HepG2 (cell line): ENCODE measurements at regions of chr17 and their contacts with region 1.

Region 1: DNA sequence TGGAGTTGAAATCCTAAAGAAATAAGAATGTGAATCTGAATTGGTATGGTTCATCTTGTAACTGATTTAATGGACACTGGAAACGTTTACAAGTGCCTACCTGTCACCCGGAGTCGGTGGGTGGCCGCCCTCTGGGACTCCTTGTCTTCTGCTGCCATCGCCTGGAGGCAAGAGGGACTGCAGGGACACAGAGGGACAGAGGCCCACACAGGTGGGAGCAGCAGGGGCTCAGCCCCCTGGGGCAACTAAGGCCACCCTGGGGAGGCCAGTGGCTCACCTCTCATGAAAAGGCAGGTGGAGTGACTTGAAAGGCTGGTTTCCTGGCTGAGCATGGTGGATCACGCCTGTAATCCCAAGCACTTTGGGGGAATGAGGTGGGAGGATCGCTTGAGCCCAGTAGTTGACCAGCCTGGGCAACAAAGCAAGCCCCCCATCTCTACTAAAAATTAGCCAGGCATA is 23.2 kb downstream of the TMEM92 start:
- DNase-seq: peak; percentile 75
- ATAC-seq: peak; percentile 98
- H3K4me3 ChIP-seq: no peak overlapping the region
- H3K27ac ChIP-seq: no peak overlapping the region
- H3K4me1 ChIP-seq: no peaks in the 10 kb centered on the region
- H3K27me3 ChIP-seq: peaks cover 2 to 4% of the 10 kb centered on the region in 2 experiments; a peak in 2 of 5 replicates
- CTCF ChIP-seq: peak; percentile 98
- EP300 ChIP-seq: no peak
- POLR2A ChIP-seq: no peak
- RAD21 ChIP-seq: peak; percentile 98

Region 2: DNA sequence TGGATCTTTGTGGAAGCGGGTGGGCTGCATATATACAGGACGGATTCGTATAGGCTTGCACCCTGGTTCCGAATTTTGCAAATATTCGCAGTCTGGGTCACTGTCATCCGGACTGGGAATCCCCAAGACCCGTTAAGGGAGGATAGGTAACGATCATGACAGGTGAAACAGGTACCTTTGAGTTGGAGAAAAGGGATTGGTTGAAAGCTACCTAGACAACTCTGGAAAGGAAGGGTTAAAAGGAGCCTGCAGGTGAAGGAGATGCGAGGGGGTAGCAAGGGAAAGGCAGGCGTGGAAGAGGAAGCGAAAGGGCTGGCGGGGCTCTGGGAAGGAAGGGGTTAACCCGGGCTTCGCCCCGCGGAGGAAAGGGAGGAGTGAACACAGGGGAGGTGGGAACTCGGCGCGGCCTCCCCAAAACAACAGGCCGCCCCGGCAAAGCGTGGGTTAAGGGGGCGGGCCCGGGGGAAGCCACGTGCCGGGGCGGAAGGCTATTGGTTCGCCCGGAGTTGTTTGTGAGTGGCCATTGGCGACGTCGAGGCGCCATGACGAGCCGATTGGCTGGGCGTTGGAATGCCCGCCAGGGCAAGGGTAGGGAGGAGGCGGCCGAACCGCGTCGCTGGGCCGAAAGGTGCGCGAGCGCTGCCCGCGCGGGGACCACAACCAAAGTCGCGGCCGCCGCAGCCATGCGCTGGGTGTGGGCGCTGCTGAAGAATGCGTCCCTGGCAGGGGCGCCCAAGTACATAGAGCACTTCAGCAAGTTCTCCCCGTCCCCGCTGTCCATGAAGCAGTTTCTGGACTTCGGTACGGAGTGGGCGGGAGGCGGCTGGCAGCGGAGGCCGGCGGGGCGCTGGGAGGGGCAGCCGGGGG is 202.4 kb before region 1 on chr17 and contains the start of gene PDK2:
- CTCF ChIA-PET with region 1: interaction called, 15 read pairs
- POLR2A ChIA-PET with region 1: no interaction called
- in situ Hi-C with region 1: no loop called
- intact Hi-C with region 1: loop called (anchors 1 kb)
- DNase-seq: peak; percentile 95
- ATAC-seq: peak; percentile 96
- H3K4me3 ChIP-seq: peak within 1 kb of the TSS; percentile 84 to 88 (median 87)
- H3K27ac ChIP-seq: peak within 1 kb of the TSS; percentile 67
- H3K4me1 ChIP-seq: peaks cover 21% of the 10 kb centered on the region
- H3K27me3 ChIP-seq: peaks cover 3 to 20% of the 10 kb centered on the region in 2 experiments; a peak in 4 of 5 replicates
- CTCF ChIP-seq: no peak
- EP300 ChIP-seq: no peak; a peak in 1 of 4 replicates
- POLR2A ChIP-seq: peak; percentile 58 to 65
- RAD21 ChIP-seq: no peak; the same call in 1 of the 2 replicates
- total RNA-seq, gene PDK2: 18.5 and 19.2 TPM in 2 replicates

Region 3: GRCh38 chr17:50169121-50169764 is 128.2 kb before region 1 on chr17:
- CTCF ChIA-PET with region 1: interaction called, 18 read pairs
- POLR2A ChIA-PET with region 1: no interaction called
- in situ Hi-C with region 1: no loop called
- intact Hi-C with region 1: no loop called
- DNase-seq: peak; percentile 69
- ATAC-seq: peak; percentile 58
- H3K4me3 ChIP-seq: no peak overlapping the region
- H3K27ac ChIP-seq: no peak overlapping the region
- H3K4me1 ChIP-seq: peaks cover 33% of the 10 kb centered on the region
- H3K27me3 ChIP-seq: peaks cover 10 to 46% of the 10 kb centered on the region in 2 experiments; a peak in 3 of 5 replicates
- CTCF ChIP-seq: peak; percentile 92
- EP300 ChIP-seq: no peak
- POLR2A ChIP-seq: no peak
- RAD21 ChIP-seq: peak; percentile 92

Region 4: GRCh38 chr17:50200457-50201275 is 96.8 kb before region 1 on chr17:
- CTCF ChIA-PET with region 1: interaction called, 223 read pairs
- POLR2A ChIA-PET with region 1: no interaction called
- in situ Hi-C with region 1: no loop called
- intact Hi-C with region 1: loop called (anchors 1 kb)
- DNase-seq: peak; percentile 71
- ATAC-seq: peak; percentile 84
- H3K4me3 ChIP-seq: peak overlapping the region; percentile 26 to 73 (median 36); a peak in 5 of 6 replicates
- H3K27ac ChIP-seq: no peak overlapping the region
- H3K4me1 ChIP-seq: 0 out of 2 replicates have a peak, but pooled peaks cover 9% of the 10 kb centered on the region
- H3K27me3 ChIP-seq: peaks cover 10 to 72% of the 10 kb centered on the region in 2 experiments
- CTCF ChIP-seq: peak; percentile 95
- EP300 ChIP-seq: no peak
- POLR2A ChIP-seq: no peak
- RAD21 ChIP-seq: peak; percentile 100

Region 5: GRCh38 chr17:50258647-50259476 is 38.6 kb before region 1 on chr17:
- CTCF ChIA-PET with region 1: no interaction called
- POLR2A ChIA-PET with region 1: no interaction called
- in situ Hi-C with region 1: no loop called
- intact Hi-C with region 1: no loop called
- DNase-seq: no peak
- ATAC-seq: no peak
- H3K4me3 ChIP-seq: no peak overlapping the region
- H3K27ac ChIP-seq: no peak overlapping the region
- H3K4me1 ChIP-seq: no peaks in the 10 kb centered on the region
- H3K27me3 ChIP-seq: peaks cover 23 to 82% of the 10 kb centered on the region in 2 experiments
- CTCF ChIP-seq: no peak
- EP300 ChIP-seq: no peak
- POLR2A ChIP-seq: no peak
- RAD21 ChIP-seq: no peak

Region 6: GRCh38 chr17:50269477-50270434 is 27.7 kb before region 1 on chr17:
- CTCF ChIA-PET with region 1: interaction called, 17 read pairs
- POLR2A ChIA-PET with region 1: no interaction called
- in situ Hi-C with region 1: no loop called
- intact Hi-C with region 1: no loop called
- DNase-seq: peak; percentile 61
- ATAC-seq: peak; percentile 77
- H3K4me3 ChIP-seq: no peak overlapping the region
- H3K27ac ChIP-seq: no peak overlapping the region
- H3K4me1 ChIP-seq: peaks cover 31% of the 10 kb centered on the region
- H3K27me3 ChIP-seq: peaks cover 10 to 73% of the 10 kb centered on the region in 2 experiments; a peak in 4 of 5 replicates
- CTCF ChIP-seq: peak; percentile 76
- EP300 ChIP-seq: no peak
- POLR2A ChIP-seq: no peak
- RAD21 ChIP-seq: peak; percentile 77

Region 7: DNA sequence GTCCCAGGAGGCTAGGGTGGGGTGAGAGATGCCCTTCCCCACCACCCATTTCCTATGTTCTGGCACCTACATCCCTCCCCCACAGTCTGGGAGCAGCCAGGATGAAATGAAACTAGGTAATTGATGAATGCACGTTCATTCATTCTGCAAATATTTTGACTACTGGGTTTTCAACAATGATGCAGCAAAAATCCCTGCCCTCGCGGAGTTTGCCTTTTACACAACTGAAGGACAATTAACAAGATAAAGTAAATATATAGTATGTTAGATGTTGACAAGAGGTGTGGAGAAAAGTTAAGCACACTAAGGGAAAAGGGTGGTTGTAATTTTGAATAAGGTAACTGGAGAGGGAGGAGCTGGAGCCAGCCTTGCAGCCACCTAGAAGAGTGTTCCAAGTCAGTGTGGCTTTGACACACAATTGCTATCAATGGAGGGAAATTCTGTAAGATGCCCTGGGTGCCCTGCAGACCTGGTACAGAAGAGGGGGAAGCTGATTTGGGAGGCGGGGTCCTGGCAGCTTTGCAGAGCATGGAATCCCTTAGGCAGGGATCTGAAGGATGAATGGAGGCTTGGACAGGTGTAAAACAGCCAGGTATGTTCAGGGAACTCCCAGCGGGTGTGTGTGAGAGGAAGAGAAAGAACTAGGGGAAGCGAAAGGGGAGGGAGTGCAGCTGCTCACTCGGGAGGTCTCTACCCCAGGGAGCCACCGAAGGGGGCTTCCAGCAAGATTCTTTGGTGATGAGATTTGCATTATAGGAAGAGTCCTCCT is 20.7 kb before region 1 on chr17:
- CTCF ChIA-PET with region 1: interaction called, 17 read pairs
- POLR2A ChIA-PET with region 1: no interaction called
- in situ Hi-C with region 1: no loop called
- intact Hi-C with region 1: loop called (anchors 2 kb)
- DNase-seq: peak; percentile 50
- ATAC-seq: no peak
- H3K4me3 ChIP-seq: no peak overlapping the region
- H3K27ac ChIP-seq: no peak overlapping the region
- H3K4me1 ChIP-seq: peaks cover 21% of the 10 kb centered on the region
- H3K27me3 ChIP-seq: peaks cover 7 to 64% of the 10 kb centered on the region in 2 experiments; a peak in 4 of 5 replicates
- CTCF ChIP-seq: no peak
- EP300 ChIP-seq: 0 out of 4 replicates have a peak, but pooled peaks of 1 of the 2 experiments have one; percentile 6
- POLR2A ChIP-seq: no peak
- RAD21 ChIP-seq: no peak